ENCODE measurements at regions of chr11 and their contacts with region 1.

Region 1: GRCh38 chr11:96424693-96425092 is 34.9 kb downstream of the JRKL start:
- DNase-seq: no peak
- H3K4me3 Mint-ChIP-seq: no peak overlapping the region
- H3K27ac Mint-ChIP-seq: no peak overlapping the region
- H3K4me1 Mint-ChIP-seq: peaks cover 22% of the 10 kb centered on the region
- H3K27me3 Mint-ChIP-seq: no peaks in the 10 kb centered on the region
- CTCF ChIP-seq: no peak

Region 2: GRCh38 chr11:95076416-95076815 is 1348.3 kb before region 1 on chr11:
- CTCF ChIA-PET with region 1: no interaction called
- intact Hi-C with region 1: loop called (anchors 10 kb)
- DNase-seq: peak; percentile 26
- H3K4me3 Mint-ChIP-seq: peak overlapping the region; percentile 15
- H3K27ac Mint-ChIP-seq: peak overlapping the region; percentile 51
- H3K4me1 Mint-ChIP-seq: peaks cover 24% of the 10 kb centered on the region
- H3K27me3 Mint-ChIP-seq: no peaks in the 10 kb centered on the region
- CTCF ChIP-seq: no peak

Region 3: GRCh38 chr11:96664110-96664509 is 239.4 kb after region 1 on chr11:
- CTCF ChIA-PET with region 1: no interaction called
- intact Hi-C with region 1: no loop called
- DNase-seq: no peak
- H3K4me3 Mint-ChIP-seq: no peak overlapping the region
- H3K27ac Mint-ChIP-seq: no peak overlapping the region
- H3K4me1 Mint-ChIP-seq: no peaks in the 10 kb centered on the region
- H3K27me3 Mint-ChIP-seq: no peaks in the 10 kb centered on the region
- CTCF ChIP-seq: no peak

Measured in Calu3 (cell line).